ENCODE measurements at regions of chr9 and their contacts with region 1.

Region 1: DNA sequence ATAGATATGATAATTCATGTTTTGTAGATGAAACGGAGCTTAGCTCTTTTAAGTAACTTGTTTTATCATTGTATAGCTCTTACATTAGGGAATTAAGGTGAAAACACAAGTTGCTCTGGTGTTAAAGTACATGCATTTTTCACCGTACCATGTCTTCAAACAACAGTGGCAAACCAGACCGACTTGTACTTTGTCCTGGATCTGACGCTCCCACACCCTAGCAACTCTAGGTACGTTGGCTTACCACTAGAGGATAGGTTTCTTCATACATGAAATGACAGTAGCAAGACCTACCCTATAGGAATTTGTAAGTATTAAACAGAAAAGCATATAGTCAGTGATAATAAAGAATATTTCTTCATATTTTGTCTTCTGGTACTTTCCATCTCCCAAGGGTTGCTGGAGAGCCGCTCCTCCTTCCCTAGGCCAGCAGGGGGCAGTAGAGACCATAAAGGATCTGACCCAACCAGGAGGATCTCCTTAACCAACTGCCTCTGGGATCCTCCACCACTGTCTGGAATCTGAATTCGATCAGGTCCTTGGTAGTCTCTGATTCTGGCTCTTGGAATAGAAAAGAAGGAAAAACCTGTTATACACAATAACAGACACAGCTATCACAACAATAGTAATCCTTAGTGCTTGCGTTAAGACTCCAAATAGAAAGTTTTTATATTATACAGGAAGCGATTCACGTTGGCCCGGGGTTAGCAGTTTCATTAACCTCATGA is 136.7 kb downstream of the CAVIN4 start:
- DNase-seq: peak in 4 of 5 donors; percentile 36 to 59 (median 52)
- ATAC-seq: peak in 2 of 4 donors; percentile 73 to 74
- H3K4me3 ChIP-seq: peak overlapping the region in 2 of 12 donors; percentile 22 to 27
- H3K27ac ChIP-seq: no peak overlapping the region
- H3K4me1 ChIP-seq: no peaks in the 10 kb centered on the region
- H3K27me3 ChIP-seq: peaks cover 0 to 9% (median 0%) of the 10 kb centered on the region in 9 donors
- CTCF ChIP-seq: peak; percentile 79 to 93 (median 83)
- POLR2A ChIP-seq: no peak

Region 2: GRCh38 chr9:100679834-100680233 is 34.7 kb before region 1 on chr9:
- intact Hi-C with region 1: no loop called
- DNase-seq: no peak
- ATAC-seq: peak in 1 of 4 donors; percentile 20
- H3K4me3 ChIP-seq: no peak overlapping the region
- H3K27ac ChIP-seq: no peak overlapping the region
- H3K4me1 ChIP-seq: peaks cover 0 to 3% (median 0%) of the 10 kb centered on the region in 12 donors
- H3K27me3 ChIP-seq: peaks cover 0 to 3% (median 0%) of the 10 kb centered on the region in 9 donors
- CTCF ChIP-seq: no peak
- POLR2A ChIP-seq: no peak

Region 3: GRCh38 chr9:100756221-100756620 is 41.7 kb after region 1 on chr9:
- intact Hi-C with region 1: no loop called
- DNase-seq: no peak
- ATAC-seq: no peak
- H3K4me3 ChIP-seq: no peak overlapping the region
- H3K27ac ChIP-seq: no peak overlapping the region
- H3K4me1 ChIP-seq: no peaks in the 10 kb centered on the region
- H3K27me3 ChIP-seq: peaks cover 0 to 6% (median 0%) of the 10 kb centered on the region in 9 donors
- CTCF ChIP-seq: no peak
- POLR2A ChIP-seq: no peak

Region 4: DNA sequence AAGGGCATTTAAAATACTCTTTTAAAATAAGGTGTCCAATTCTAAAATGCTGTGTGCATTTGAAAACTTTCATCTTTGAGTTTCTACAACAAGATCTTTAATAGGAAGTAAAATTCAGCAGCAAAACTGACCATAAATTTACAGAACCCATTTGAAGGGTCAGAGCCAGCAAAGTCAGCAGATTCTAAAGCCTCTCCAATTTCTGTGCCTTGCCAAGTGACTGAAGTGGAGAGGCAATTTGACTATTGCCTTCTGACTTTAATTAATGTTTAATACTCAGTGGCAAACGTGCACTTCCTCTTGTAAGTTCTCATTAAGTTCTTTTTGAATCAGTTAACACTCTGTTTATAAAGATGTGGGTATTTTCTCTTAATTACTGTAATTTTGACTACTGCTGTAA is 515.1 kb after region 1 on chr9:
- intact Hi-C with region 1: loop called in 7 of 10 experiments (anchors 2 to 10 kb)
- DNase-seq: no peak
- ATAC-seq: no peak
- H3K4me3 ChIP-seq: no peak overlapping the region
- H3K27ac ChIP-seq: no peak overlapping the region
- H3K4me1 ChIP-seq: no peaks in the 10 kb centered on the region
- H3K27me3 ChIP-seq: no peaks in the 10 kb centered on the region
- CTCF ChIP-seq: no peak
- POLR2A ChIP-seq: no peak

Region 5: GRCh38 chr9:101235105-101235866 is 520.8 kb after region 1 on chr9:
- intact Hi-C with region 1: loop called (anchors 2 to 10 kb)
- DNase-seq: no peak
- ATAC-seq: peak in 1 of 4 donors; percentile 36
- H3K4me3 ChIP-seq: no peak overlapping the region
- H3K27ac ChIP-seq: no peak overlapping the region
- H3K4me1 ChIP-seq: no peaks in the 10 kb centered on the region
- H3K27me3 ChIP-seq: peaks cover 0 to 3% (median 0%) of the 10 kb centered on the region in 9 donors
- CTCF ChIP-seq: peak; percentile 32 to 67 (median 50)
- POLR2A ChIP-seq: no peak

Region 6: GRCh38 chr9:101311758-101312420 is 597.4 kb after region 1 on chr9:
- intact Hi-C with region 1: loop called (anchors 1 to 5 kb)
- DNase-seq: no peak
- ATAC-seq: peak in 1 of 4 donors; percentile 45
- H3K4me3 ChIP-seq: no peak overlapping the region
- H3K27ac ChIP-seq: no peak overlapping the region
- H3K4me1 ChIP-seq: no peaks in the 10 kb centered on the region
- H3K27me3 ChIP-seq: peaks cover 0 to 17% (median 0%) of the 10 kb centered on the region in 9 donors
- CTCF ChIP-seq: peak; percentile 59 to 83 (median 72)
- POLR2A ChIP-seq: no peak

Region 7: GRCh38 chr9:101400120-101400519 is 685.6 kb after region 1 on chr9:
- intact Hi-C with region 1: no loop called
- DNase-seq: peak in 3 of 5 donors; percentile 25 to 64 (median 43)
- ATAC-seq: peak in 3 of 4 donors; percentile 7 to 62 (median 38)
- H3K4me3 ChIP-seq: peak overlapping the region; percentile 37 to 86 (median 77)
- H3K27ac ChIP-seq: peak overlapping the region; percentile 78 to 95 (median 91)
- H3K4me1 ChIP-seq: peaks cover 10 to 57% (median 34%) of the 10 kb centered on the region in 12 donors
- H3K27me3 ChIP-seq: no peaks in the 10 kb centered on the region
- CTCF ChIP-seq: no peak
- POLR2A ChIP-seq: no peak

Measured in heart left ventricle (tissue), 16 donors.